B cell (primary cell): ENCODE measurements at regions of chr11 and their contacts with region 1.

Region 1: GRCh38 chr11:62841361-62842184 is 2.2 kb upstream of the WDR74 start:
- DNase-seq: peak; percentile 95
- ATAC-seq: peak; percentile 58
- H3K4me3 ChIP-seq: peak overlapping the region; percentile 61 to 97 (median 91)
- H3K4me3 Mint-ChIP-seq: no peak overlapping the region
- H3K27ac ChIP-seq: peak overlapping the region; percentile 99 to 100
- H3K27ac Mint-ChIP-seq: no peak overlapping the region
- H3K4me1 ChIP-seq: peaks cover 14 to 33% of the 10 kb centered on the region in 2 donors
- H3K4me1 Mint-ChIP-seq: peaks cover 18% of the 10 kb centered on the region
- H3K27me3 ChIP-seq: no peaks in the 10 kb centered on the region
- H3K27me3 Mint-ChIP-seq: no peaks in the 10 kb centered on the region
- CTCF ChIP-seq: no peak

Region 2: DNA sequence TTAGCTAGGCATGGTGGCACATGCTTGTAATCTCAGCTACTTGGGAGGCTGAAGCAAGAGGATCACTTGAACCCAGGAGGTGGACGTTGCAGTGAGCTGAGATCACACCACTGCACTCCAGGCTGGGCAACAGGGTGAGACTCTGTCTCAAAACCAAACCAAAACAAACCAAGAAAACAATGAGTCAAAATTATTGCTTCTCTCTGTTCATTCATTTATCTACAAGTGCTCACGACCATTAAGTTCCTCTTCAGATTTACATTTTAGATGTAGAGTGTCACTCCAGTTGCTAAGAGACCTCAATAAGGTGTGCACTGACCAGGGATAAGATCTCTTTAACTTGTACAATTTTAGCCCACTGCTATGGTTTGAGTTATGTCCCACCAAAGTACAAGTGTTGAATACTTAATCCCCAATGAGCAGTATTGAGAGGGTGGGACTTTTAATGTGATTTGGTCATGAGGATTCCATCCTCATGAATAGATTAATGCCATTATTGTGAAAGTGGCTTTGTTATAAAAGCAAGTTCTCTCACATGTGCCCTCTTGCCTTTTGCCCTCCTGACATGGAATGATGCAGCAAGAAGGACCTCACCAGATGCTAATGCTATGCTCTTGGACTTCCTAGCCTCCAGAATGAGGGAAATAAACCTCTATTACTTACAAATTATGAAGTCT is 122.1 kb before region 1 on chr11:
- CTCF ChIA-PET with region 1: no interaction called
- POLR2A ChIA-PET with region 1: no interaction called
- intact Hi-C with region 1: no loop called
- DNase-seq: no peak
- ATAC-seq: no peak
- H3K4me3 ChIP-seq: no peak overlapping the region
- H3K4me3 Mint-ChIP-seq: no peak overlapping the region
- H3K27ac ChIP-seq: no peak overlapping the region
- H3K27ac Mint-ChIP-seq: no peak overlapping the region
- H3K4me1 ChIP-seq: peaks cover 8 to 11% of the 10 kb centered on the region in 2 donors
- H3K4me1 Mint-ChIP-seq: peaks cover 27% of the 10 kb centered on the region
- H3K27me3 ChIP-seq: no peaks in the 10 kb centered on the region
- H3K27me3 Mint-ChIP-seq: no peaks in the 10 kb centered on the region
- CTCF ChIP-seq: no peak

Region 3: DNA sequence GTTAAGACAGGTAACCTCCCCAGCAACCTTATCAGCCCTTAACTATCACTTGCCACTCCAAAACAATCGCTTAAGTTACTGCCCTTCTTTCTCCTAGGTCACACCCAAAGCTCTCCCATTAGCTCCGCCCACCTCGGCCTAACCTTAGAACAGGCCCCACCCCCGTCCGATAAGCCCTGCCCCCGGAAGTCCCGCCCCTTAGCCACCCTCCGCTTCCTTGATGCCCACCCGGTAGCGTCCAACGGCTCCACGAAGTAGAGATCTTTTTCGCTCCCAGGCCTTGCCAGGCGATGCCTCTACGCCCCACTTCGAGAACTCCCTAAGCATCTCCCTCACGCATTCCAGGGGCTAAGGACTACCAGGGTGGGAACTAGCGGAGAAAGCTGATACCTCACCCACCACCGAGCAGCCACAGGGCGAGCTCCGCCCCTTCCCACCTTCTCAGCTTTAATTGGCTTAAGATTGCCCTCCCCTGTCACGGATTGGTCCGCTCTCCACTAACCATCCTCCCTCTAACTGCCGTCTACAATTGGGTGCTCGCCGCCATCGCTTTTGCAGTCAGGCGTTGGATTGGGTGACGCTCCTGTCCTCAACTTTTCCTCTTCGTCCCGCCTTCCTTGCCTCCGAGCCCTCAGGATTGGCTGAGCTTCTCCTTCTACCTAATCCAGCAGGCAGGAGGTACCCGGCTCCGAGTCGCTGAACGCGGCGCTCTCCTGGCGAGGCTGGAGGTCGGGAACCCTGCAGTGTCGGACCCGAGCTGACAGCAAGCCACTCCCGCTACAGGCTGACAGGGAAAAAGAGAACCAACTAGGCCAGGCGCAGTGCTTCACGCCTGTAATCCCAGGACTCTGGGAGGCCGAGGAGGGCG is 87.6 kb before region 1 on chr11 and contains the start of gene ZBTB3:
- CTCF ChIA-PET with region 1: no interaction called
- POLR2A ChIA-PET with region 1: interaction called, 27 read pairs
- intact Hi-C with region 1: loop called (anchors 1 kb)
- DNase-seq: peak; percentile 99
- ATAC-seq: peak; percentile 92
- H3K4me3 ChIP-seq: peak within 1 kb of the TSS; percentile 82 to 94 (median 86)
- H3K4me3 Mint-ChIP-seq: peak within 1 kb of the TSS; percentile 99
- H3K27ac ChIP-seq: peak within 1 kb of the TSS; percentile 80 to 84
- H3K27ac Mint-ChIP-seq: peak within 1 kb of the TSS; percentile 99
- H3K4me1 ChIP-seq: peaks cover 7 to 21% of the 10 kb centered on the region in 2 donors
- H3K4me1 Mint-ChIP-seq: peaks cover 27% of the 10 kb centered on the region
- H3K27me3 ChIP-seq: no peaks in the 10 kb centered on the region
- H3K27me3 Mint-ChIP-seq: no peaks in the 10 kb centered on the region
- CTCF ChIP-seq: no peak
- total RNA-seq, gene ZBTB3: 22.0 and 24.8 TPM in 2 replicates

Region 4: GRCh38 chr11:62771144-62772021 is 70.2 kb before region 1 on chr11 and contains the start of gene TAF6L:
- CTCF ChIA-PET with region 1: interaction called, 3 read pairs
- POLR2A ChIA-PET with region 1: interaction called, 13 read pairs
- intact Hi-C with region 1: no loop called
- DNase-seq: peak; percentile 88
- ATAC-seq: peak; percentile 90
- H3K4me3 ChIP-seq: peak within 1 kb of the TSS; percentile 58 to 97 (median 68)
- H3K4me3 Mint-ChIP-seq: peak within 1 kb of the TSS; percentile 95
- H3K27ac ChIP-seq: peak within 1 kb of the TSS; percentile 63 to 84
- H3K27ac Mint-ChIP-seq: peak within 1 kb of the TSS; percentile 96
- H3K4me1 ChIP-seq: peaks cover 15 to 23% of the 10 kb centered on the region in 2 donors
- H3K4me1 Mint-ChIP-seq: peaks cover 26% of the 10 kb centered on the region
- H3K27me3 ChIP-seq: no peaks in the 10 kb centered on the region
- H3K27me3 Mint-ChIP-seq: no peaks in the 10 kb centered on the region
- CTCF ChIP-seq: no peak
- total RNA-seq, gene TAF6L: 43.2 and 48.2 TPM in 2 replicates

Region 5: DNA sequence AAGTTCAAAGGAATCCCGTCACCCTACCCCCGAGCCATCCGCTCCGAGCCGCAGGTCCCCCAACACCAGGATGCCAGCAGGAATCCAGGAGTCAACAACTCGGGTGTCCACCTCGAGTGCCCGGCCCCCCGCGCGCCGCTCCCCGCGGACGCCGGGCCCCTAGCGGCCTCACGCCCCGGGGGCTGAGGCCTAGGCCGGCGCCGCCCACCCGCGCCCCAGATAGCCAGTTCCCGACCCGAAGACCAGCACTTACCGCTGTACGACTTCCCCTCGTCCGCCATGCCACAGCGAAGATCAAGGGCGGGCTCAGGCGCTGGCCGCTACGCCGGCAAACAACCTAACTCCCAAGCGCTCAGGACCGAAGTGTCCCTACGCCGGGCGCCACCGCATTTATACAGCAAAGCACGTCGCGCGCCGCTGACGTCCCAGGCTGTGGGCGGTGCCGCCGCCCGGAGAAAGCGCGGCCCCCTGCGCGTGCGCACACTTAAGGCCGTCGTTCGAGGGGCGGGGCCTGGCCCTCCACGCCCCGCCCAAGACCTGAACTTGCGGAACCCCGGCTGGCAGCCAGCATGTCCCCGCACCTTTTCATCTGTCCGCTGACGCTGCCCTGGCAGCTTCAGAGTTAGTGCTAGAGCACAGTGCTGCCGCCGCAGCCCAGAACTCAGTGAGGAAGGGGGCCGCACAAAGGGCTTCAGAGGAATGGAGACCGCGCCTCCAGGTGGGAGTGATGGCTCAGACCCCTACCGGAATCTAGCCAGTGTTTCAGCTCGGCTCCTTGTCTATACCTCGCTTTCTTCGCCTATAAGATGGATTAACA is 36.3 kb before region 1 on chr11 and contains the start of gene NXF1:
- CTCF ChIA-PET with region 1: interaction called, 3 read pairs
- POLR2A ChIA-PET with region 1: interaction called, 27 read pairs
- intact Hi-C with region 1: loop called (anchors 1 kb)
- DNase-seq: peak; percentile 98
- ATAC-seq: peak; percentile 87
- H3K4me3 ChIP-seq: peak within 1 kb of the TSS; percentile 77 to 96 (median 89)
- H3K4me3 Mint-ChIP-seq: peak within 1 kb of the TSS; percentile 100
- H3K27ac ChIP-seq: peak within 1 kb of the TSS; percentile 69 to 86
- H3K27ac Mint-ChIP-seq: peak within 1 kb of the TSS; percentile 99
- H3K4me1 ChIP-seq: peaks cover 11 to 25% of the 10 kb centered on the region in 2 donors
- H3K4me1 Mint-ChIP-seq: peaks cover 32% of the 10 kb centered on the region
- H3K27me3 ChIP-seq: no peaks in the 10 kb centered on the region
- H3K27me3 Mint-ChIP-seq: no peaks in the 10 kb centered on the region
- CTCF ChIP-seq: peak; percentile 22
- total RNA-seq, gene NXF1: 161 TPM in 2 replicates

Region 6: GRCh38 chr11:62855571-62856332 is 14.2 kb after region 1 on chr11:
- CTCF ChIA-PET with region 1: interaction called, 9 read pairs
- POLR2A ChIA-PET with region 1: interaction called, 159 read pairs
- intact Hi-C with region 1: loop called (anchors 1 kb)
- DNase-seq: peak; percentile 99
- ATAC-seq: peak; percentile 92
- H3K4me3 ChIP-seq: peak overlapping the region; percentile 68 to 100 (median 99)
- H3K4me3 Mint-ChIP-seq: peak overlapping the region; percentile 99
- H3K27ac ChIP-seq: peak overlapping the region; percentile 65 to 84
- H3K27ac Mint-ChIP-seq: peak overlapping the region; percentile 98
- H3K4me1 ChIP-seq: peaks cover 39 to 58% of the 10 kb centered on the region in 2 donors
- H3K4me1 Mint-ChIP-seq: peaks cover 60% of the 10 kb centered on the region
- H3K27me3 ChIP-seq: no peaks in the 10 kb centered on the region
- H3K27me3 Mint-ChIP-seq: no peaks in the 10 kb centered on the region
- CTCF ChIP-seq: no peak